MCF 10A (cell line): ENCODE measurements at regions of chr4 and their contacts with region 1.

Region 1: DNA sequence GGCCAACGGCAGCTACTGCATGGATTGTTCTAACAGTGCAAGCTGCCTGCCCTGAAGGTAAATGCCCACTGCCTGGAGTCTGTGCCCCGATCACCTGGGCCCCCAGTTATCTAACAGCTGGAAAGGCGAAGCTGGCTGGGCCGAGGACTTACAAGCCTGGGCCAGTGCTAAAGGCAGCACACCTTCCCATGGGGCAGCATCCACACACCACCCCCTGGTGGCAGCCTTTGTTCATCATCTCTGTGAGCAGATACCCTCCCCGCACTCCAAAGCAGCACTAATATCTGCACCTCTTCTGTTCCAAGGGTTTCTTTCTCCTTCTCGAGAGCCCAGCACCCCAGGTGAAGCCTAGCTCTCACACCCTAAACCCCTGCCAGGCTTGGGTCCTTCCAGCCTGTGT is 7.6 kb downstream of the SLC2A9 start:
- DNase-seq: peak; percentile 59
- H3K4me3 Mint-ChIP-seq: no peak overlapping the region
- H3K27ac Mint-ChIP-seq: no peak overlapping the region
- H3K4me1 Mint-ChIP-seq: peaks cover 17% of the 10 kb centered on the region
- H3K27me3 Mint-ChIP-seq: no peaks in the 10 kb centered on the region
- CTCF ChIP-seq: peak; percentile 52

Region 2: GRCh38 chr4:9762823-9763475 is 250.8 kb before region 1 on chr4:
- CTCF ChIA-PET with region 1: interaction called, 74 read pairs
- POLR2A ChIA-PET with region 1: interaction called, 3 read pairs
- intact Hi-C with region 1: loop called (anchors 1 kb)
- DNase-seq: peak; percentile 81
- H3K4me3 Mint-ChIP-seq: no peak overlapping the region
- H3K27ac Mint-ChIP-seq: no peak overlapping the region
- H3K4me1 Mint-ChIP-seq: peaks cover 5% of the 10 kb centered on the region
- H3K27me3 Mint-ChIP-seq: peaks cover 28% of the 10 kb centered on the region
- CTCF ChIP-seq: peak; percentile 74

Region 3: GRCh38 chr4:9771034-9771433 is 242.7 kb before region 1 on chr4:
- CTCF ChIA-PET with region 1: interaction called, 32 read pairs
- POLR2A ChIA-PET with region 1: interaction called, 3 read pairs
- intact Hi-C with region 1: no loop called
- DNase-seq: peak; percentile 23
- H3K4me3 Mint-ChIP-seq: no peak overlapping the region
- H3K27ac Mint-ChIP-seq: no peak overlapping the region
- H3K4me1 Mint-ChIP-seq: no peaks in the 10 kb centered on the region
- H3K27me3 Mint-ChIP-seq: peaks cover 54% of the 10 kb centered on the region
- CTCF ChIP-seq: no peak